Activated CD4-positive, alpha-beta T cell treated with anti-CD3 and anti-CD28 coated beads, Interleukin-2, amount 10 ng/mL, durations not matched to agents 24 days and 14 days (primary cell): ENCODE measurements at regions of chr5 and their contacts with region 1.

Region 1: GRCh38 chr5:172806897-172807672 is 27.0 kb upstream of the ERGIC1 start:
- DNase-seq: peak; percentile 93
- H3K4me3 Mint-ChIP-seq: peak overlapping the region; percentile 69
- H3K27ac Mint-ChIP-seq: peak overlapping the region; percentile 80
- H3K4me1 Mint-ChIP-seq: peaks cover 14% of the 10 kb centered on the region
- H3K27me3 Mint-ChIP-seq: no peaks in the 10 kb centered on the region

Region 2: DNA sequence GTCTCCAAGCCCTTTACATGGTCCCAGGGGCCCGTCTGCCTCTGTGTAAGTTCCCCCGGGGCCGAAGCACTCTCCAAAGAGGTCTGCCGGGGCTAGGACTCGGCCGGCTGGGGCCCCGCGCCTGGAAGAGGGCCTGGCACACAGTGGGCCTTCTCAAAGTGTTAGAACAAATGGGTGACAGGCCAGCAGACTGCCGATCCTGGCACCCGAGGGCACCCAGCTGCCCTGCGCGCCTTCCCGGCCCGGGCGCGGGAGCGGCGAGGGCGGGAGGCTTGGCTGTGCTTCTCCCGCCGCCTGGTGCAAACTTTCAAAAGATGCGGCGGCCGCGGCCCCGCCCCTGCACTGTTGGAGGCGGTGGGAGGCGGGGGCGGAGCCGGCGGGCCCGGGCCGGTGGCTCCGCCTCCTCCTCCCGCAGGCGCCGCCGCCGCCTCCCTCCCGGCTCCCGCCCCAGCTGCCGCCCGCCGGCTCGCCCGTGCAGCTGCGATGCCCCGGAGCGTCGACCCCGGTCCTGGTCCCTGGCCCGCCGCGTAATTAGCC is 166.2 kb before region 1 on chr5 and contains the start of gene NEURL1B:
- intact Hi-C with region 1: no loop called
- DNase-seq: peak; percentile 91
- H3K4me3 Mint-ChIP-seq: peak within 1 kb of the TSS; percentile 55
- H3K27ac Mint-ChIP-seq: no peak within 1 kb of the TSS
- H3K4me1 Mint-ChIP-seq: peaks cover 10% of the 10 kb centered on the region
- H3K27me3 Mint-ChIP-seq: peaks cover 46% of the 10 kb centered on the region
- total RNA-seq, gene NEURL1B: 0.05 and 0.31 TPM in 2 replicates

Region 3: DNA sequence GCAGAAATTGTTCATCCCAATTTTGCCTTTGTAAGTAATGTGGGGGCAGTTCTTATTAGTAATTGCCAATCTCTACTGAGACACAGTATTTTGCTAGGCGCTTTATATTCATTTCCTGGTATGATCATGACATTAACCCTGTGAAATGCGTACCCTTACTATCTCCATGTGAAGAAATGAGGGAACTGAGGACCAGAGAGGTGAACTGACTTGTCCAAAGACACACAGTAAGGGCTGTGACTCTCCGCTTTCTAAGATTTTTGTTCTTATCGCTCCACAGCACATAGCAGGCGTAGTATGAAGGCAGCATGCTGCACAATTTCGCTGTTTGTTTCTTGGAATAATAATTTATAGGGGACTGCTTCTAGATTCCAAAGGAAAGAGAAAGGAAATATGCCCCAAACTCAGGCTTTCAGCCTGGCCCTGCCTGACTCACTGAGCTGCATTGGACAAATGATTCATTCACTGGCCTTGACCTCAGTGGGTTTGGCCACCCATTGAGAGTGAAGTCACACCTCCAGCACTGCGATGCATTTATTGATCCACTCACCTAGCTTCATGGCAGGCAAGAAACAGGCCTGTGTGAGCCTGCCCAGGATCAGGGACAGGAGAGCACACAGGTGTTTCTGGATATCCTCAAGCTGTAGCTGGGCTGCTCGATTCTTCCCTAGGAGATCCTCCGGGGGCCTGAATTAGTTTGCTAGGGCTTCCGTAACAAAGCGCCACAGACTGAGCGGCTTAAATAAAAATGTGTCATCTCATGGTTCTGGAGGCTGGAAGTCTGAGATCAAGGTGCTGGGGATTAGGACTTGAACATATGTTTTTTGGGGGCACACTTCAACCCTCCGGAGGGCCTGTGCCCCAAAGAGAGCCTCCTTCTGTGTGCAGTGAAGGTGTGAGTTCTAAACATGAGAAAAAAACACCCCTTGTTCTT is 28.9 kb before region 1 on chr5:
- intact Hi-C with region 1: loop called (anchors 1 kb)
- DNase-seq: peak; percentile 71
- H3K4me3 Mint-ChIP-seq: peak overlapping the region; percentile 60
- H3K27ac Mint-ChIP-seq: peak overlapping the region; percentile 87
- H3K4me1 Mint-ChIP-seq: peaks cover 35% of the 10 kb centered on the region
- H3K27me3 Mint-ChIP-seq: no peaks in the 10 kb centered on the region

Region 4: DNA sequence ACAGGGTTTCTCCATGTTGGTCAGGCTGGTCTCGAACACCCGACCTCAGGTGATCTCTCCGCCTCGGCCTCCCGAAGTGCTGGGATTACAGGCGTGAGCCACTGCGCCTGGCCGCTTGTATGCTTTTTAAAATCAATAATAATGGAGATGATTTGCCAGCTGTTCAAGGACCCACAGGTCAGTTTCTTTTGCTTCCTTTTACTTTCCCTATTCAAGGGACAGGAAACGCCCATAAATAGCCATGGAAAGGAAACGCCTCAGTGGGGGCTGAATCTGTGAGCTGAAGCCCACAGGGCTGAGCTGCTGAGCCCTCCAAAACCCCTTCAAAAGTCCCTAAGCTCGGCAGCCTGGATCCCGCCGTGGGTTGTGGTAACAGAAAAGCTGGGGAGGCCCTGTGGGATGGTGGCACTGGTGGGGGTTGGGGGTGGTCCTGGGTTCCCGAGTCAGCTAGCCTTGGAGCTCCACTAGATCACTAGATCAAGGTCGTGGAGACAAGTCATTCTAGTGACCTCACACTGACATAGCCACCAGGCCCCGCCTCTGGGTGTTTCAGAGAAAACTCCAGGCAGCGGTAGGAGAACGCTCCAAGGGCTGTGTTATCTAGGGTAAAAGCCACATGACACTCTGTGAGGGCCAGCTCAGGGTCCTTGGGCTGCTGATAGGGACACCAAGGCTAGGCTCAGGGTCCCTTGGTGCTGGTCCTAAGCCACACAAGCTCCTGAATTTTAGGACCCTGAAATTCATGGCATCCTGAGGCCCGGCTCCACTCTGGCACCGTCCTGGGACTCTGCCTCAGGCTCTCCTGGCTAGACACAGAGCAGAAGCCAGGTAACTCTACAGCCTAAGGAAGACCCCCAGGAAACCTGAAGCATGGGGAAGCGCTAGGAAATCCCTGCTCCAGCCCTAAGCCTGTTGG is 18.1 kb before region 1 on chr5:
- intact Hi-C with region 1: no loop called
- DNase-seq: no peak
- H3K4me3 Mint-ChIP-seq: no peak overlapping the region
- H3K27ac Mint-ChIP-seq: no peak overlapping the region
- H3K4me1 Mint-ChIP-seq: peaks cover 2% of the 10 kb centered on the region
- H3K27me3 Mint-ChIP-seq: no peaks in the 10 kb centered on the region

Region 5: GRCh38 chr5:172833686-172834414 is 26.8 kb after region 1 on chr5 and contains the start of gene ERGIC1:
- intact Hi-C with region 1: loop called (anchors 1 kb)
- DNase-seq: peak; percentile 95
- H3K4me3 Mint-ChIP-seq: peak within 1 kb of the TSS; percentile 89
- H3K27ac Mint-ChIP-seq: peak within 1 kb of the TSS; percentile 76
- H3K4me1 Mint-ChIP-seq: peaks cover 27% of the 10 kb centered on the region
- H3K27me3 Mint-ChIP-seq: no peaks in the 10 kb centered on the region
- total RNA-seq, gene ERGIC1: 47.1 and 47.3 TPM in 2 replicates

Region 6: DNA sequence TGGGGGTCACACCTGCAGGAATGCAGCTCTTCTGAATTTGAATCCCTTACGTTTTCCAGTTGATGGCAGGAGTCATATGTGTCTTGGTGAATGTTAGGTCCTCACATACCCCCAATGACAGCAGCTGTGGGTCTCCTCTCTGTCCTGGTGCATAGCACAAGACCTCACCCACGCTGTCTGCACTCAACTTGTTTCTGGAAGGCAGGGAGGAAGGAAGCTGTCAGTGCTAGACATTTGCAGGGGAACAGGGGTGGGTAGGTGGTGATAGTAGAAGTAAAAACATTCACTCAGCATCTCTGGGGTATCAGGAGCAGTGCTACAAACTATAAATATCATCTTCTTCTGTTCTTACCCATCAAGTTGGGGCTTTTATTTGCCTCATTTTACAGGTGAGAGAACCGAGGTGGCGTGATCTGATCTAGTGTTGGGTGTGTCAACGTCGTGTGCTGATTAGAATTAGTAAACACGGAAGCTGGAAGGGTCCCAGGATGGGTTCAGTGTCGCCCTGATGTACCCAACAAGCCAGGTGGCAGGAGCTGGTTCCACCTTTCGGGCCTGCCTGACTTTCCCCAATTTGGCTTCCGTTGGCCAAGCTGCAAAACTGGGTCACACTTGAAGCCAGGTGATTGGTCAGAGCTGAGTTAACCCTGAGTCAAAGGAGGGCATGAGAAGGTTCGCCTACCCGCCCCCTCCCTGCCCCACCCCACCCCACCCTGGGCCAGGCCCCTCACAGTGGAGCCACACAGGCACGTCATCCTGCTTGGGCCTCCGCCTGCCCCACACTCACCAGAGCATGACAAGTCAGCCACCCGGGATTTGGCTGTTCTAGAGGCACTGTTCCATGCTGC is 42.7 kb after region 1 on chr5:
- intact Hi-C with region 1: no loop called
- DNase-seq: no peak
- H3K4me3 Mint-ChIP-seq: no peak overlapping the region
- H3K27ac Mint-ChIP-seq: peak overlapping the region; percentile 29
- H3K4me1 Mint-ChIP-seq: peaks cover 31% of the 10 kb centered on the region
- H3K27me3 Mint-ChIP-seq: no peaks in the 10 kb centered on the region

Region 7: GRCh38 chr5:173035904-173036707 is 229.0 kb after region 1 on chr5:
- intact Hi-C with region 1: no loop called
- DNase-seq: no peak
- H3K4me3 Mint-ChIP-seq: peak overlapping the region; percentile 82
- H3K27ac Mint-ChIP-seq: peak overlapping the region; percentile 88
- H3K4me1 Mint-ChIP-seq: peaks cover 45% of the 10 kb centered on the region
- H3K27me3 Mint-ChIP-seq: no peaks in the 10 kb centered on the region